Activated CD4-positive, alpha-beta T cell treated with anti-CD3 and anti-CD28 coated beads for 36 hours (primary cell): ENCODE measurements at regions of chr7 and their contacts with region 1.

Region 1: DNA sequence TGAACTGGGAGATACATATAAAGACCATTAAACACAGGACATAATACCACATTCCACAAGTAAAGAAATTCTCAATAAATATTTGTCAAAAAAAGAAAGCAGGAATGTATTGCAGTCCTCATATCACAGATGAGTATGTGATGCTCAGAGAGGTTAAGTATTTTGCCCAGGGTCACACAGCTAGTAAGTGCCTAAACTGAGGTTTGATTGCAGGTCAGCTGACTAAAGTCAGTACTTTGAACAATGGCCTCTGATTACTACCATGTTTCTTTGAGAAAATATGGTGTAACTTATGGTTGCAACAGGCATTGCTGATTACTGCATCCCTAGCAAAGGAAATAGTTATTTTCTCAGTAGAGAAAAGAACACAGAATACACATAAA is 267.1 kb downstream of the ELMO1 start:
- DNase-seq: no peak
- ATAC-seq: no peak
- H3K4me3 Mint-ChIP-seq: no peak overlapping the region
- H3K27ac Mint-ChIP-seq: no peak overlapping the region
- H3K4me1 Mint-ChIP-seq: peaks cover 7% of the 10 kb centered on the region
- H3K27me3 Mint-ChIP-seq: no peaks in the 10 kb centered on the region

Region 2: GRCh38 chr7:36473454-36474282 is 707.9 kb before region 1 on chr7:
- CTCF ChIA-PET with region 1: interaction called, 4 read pairs
- POLR2A ChIA-PET with region 1: no interaction called
- intact Hi-C with region 1: loop called in 1 of 2 experiments (anchors 5 kb)
- DNase-seq: peak; percentile 69
- ATAC-seq: no peak
- H3K4me3 Mint-ChIP-seq: no peak overlapping the region
- H3K27ac Mint-ChIP-seq: no peak overlapping the region
- H3K4me1 Mint-ChIP-seq: peaks cover 14% of the 10 kb centered on the region
- H3K27me3 Mint-ChIP-seq: no peaks in the 10 kb centered on the region

Region 3: GRCh38 chr7:36686499-36686898 is 495.0 kb before region 1 on chr7:
- CTCF ChIA-PET with region 1: interaction called, 6 read pairs
- POLR2A ChIA-PET with region 1: no interaction called
- intact Hi-C with region 1: loop called in 1 of 2 experiments (anchors 5 kb)
- DNase-seq: peak; percentile 67
- ATAC-seq: peak; percentile 78
- H3K4me3 Mint-ChIP-seq: no peak overlapping the region
- H3K27ac Mint-ChIP-seq: peak overlapping the region; percentile 69
- H3K4me1 Mint-ChIP-seq: peaks cover 80% of the 10 kb centered on the region
- H3K27me3 Mint-ChIP-seq: no peaks in the 10 kb centered on the region

Region 4: GRCh38 chr7:36986429-36987362 is 194.8 kb before region 1 on chr7:
- CTCF ChIA-PET with region 1: interaction called, 58 read pairs
- POLR2A ChIA-PET with region 1: no interaction called
- intact Hi-C with region 1: loop called (anchors 1 kb)
- DNase-seq: peak; percentile 80
- ATAC-seq: peak; percentile 74
- H3K4me3 Mint-ChIP-seq: no peak overlapping the region
- H3K27ac Mint-ChIP-seq: no peak overlapping the region
- H3K4me1 Mint-ChIP-seq: peaks cover 23% of the 10 kb centered on the region
- H3K27me3 Mint-ChIP-seq: no peaks in the 10 kb centered on the region

Region 5: DNA sequence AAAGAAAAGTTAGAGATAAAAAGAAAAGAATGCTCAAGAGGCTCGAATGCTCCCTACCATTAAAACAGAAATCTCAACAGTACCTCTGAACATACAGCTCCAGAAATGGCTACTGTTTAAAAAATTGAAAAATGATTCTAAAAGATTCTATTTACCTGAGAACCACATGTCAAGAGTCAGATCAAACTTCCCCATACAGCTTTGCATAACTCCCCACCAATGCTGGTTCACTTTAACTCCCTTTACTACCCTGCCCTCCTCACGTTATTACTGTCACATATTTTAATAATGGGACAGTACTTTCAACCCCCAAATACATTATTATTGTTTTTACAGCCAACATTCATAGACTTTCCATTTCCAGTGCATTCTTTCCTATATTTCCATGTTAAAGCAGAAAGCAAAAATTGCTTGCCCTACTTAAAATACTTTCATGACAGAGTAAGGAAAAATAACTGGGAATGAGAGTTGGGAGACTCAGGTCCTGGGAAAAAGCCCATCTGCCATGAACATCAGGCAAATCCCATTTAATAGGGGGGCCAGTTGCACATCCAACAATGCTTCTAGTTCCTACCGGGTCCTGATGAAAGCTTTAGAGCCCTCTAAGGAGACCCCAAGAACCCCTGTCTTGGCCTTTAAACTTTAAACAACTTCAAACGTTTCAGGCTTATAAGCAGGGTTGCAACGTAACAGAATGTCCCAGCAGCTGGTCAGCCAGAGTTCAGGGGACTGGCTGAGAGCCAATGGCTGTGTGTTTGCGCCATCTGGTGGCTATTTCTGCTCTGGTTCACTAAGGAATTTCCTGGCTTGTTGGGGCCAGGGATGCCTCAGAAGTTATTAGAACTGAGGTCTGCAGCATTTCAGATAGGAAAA is 19.7 kb after region 1 on chr7:
- CTCF ChIA-PET with region 1: interaction called, 13 read pairs
- POLR2A ChIA-PET with region 1: no interaction called
- intact Hi-C with region 1: no loop called
- DNase-seq: peak; percentile 73
- ATAC-seq: no peak
- H3K4me3 Mint-ChIP-seq: no peak overlapping the region
- H3K27ac Mint-ChIP-seq: no peak overlapping the region
- H3K4me1 Mint-ChIP-seq: peaks cover 7% of the 10 kb centered on the region
- H3K27me3 Mint-ChIP-seq: no peaks in the 10 kb centered on the region

Region 6: GRCh38 chr7:37211097-37211880 is 29.7 kb after region 1 on chr7:
- CTCF ChIA-PET with region 1: no interaction called
- POLR2A ChIA-PET with region 1: no interaction called
- intact Hi-C with region 1: no loop called
- DNase-seq: no peak
- ATAC-seq: no peak
- H3K4me3 Mint-ChIP-seq: no peak overlapping the region
- H3K27ac Mint-ChIP-seq: peak overlapping the region; percentile 11
- H3K4me1 Mint-ChIP-seq: peaks cover 9% of the 10 kb centered on the region
- H3K27me3 Mint-ChIP-seq: no peaks in the 10 kb centered on the region

Region 7: DNA sequence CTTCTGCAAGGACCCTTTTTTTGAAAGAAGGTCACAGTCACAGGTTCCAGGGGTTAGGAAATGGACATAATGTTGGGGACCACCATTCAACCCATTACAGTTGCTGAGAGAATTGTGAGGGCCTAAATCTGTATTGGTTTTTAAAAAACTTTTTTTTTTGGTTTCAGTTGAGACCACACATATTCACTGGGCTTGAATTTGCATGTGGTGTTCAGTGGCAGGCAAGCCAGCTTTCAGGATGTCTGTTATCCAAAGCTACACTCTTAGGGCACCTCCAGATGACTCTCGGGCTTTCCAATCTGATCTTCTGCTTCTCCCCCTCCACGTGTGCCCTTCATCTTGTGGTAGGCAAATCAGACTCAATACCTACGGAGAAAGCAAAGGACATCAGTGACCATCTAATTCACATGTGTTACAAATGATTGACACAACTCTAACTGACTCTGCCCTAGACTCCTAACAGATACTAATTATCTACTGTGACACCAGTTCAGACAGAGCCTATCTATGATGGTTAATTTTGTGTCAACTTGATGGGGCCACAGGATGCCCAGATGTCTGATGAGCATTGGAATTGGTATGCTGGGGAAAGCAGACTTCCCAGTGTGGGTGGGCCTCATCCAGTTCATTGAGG is 360.4 kb after region 1 on chr7:
- CTCF ChIA-PET with region 1: no interaction called
- POLR2A ChIA-PET with region 1: no interaction called
- intact Hi-C with region 1: no loop called
- DNase-seq: no peak
- ATAC-seq: no peak
- H3K4me3 Mint-ChIP-seq: no peak overlapping the region
- H3K27ac Mint-ChIP-seq: no peak overlapping the region
- H3K4me1 Mint-ChIP-seq: no peaks in the 10 kb centered on the region
- H3K27me3 Mint-ChIP-seq: peaks cover 2% of the 10 kb centered on the region